Sigmoid colon (tissue), 7 donors: ENCODE measurements at regions of chr6 and their contacts with region 1.

Region 1: DNA sequence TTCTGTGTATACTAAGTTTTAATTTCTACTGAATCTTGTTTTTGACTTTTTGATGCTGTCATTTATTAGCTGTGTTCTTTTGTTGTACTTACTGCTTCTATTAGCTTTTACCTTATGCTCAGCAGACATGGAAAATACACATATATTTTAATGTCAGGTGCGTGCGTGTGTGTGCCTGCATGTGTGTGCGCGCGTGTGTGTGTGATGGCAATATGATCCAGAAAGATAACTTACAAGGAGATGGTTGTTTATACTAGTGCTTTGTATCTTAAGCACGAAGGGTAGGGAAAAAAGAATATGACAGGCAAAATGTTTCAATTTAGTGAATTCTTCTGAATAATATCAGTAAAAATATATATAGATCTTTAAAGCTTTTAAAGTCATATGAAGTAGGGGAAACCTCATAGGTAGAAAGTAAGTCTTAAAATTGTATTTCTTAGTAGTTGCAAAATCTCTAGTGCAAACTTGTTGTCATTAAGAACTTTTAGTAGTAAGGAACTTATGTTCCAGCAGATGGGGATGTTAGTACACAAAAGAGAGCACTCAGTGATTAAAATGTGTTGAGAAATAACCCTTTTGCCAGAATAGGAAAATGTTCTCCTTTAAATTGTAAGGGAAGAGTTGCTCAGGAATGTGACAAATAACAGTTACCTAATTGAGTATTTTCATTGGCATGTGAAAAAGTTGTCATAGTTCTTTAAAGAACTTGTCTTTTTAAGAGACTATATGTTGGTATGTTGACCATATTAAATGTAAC is 13.2 kb downstream of the QKI start:
- DNase-seq: no peak
- H3K4me3 ChIP-seq: no peak overlapping the region
- H3K27ac ChIP-seq: no peak overlapping the region
- H3K4me1 ChIP-seq: peaks cover 0 to 95% (median 69%) of the 10 kb centered on the region in 4 donors
- H3K27me3 ChIP-seq: no peaks in the 10 kb centered on the region
- CTCF ChIP-seq: peak in 3 of 4 experiments; percentile 17 to 26 (median 24)
- EP300 ChIP-seq: no peak
- POLR2A ChIP-seq: no peak

Region 2: DNA sequence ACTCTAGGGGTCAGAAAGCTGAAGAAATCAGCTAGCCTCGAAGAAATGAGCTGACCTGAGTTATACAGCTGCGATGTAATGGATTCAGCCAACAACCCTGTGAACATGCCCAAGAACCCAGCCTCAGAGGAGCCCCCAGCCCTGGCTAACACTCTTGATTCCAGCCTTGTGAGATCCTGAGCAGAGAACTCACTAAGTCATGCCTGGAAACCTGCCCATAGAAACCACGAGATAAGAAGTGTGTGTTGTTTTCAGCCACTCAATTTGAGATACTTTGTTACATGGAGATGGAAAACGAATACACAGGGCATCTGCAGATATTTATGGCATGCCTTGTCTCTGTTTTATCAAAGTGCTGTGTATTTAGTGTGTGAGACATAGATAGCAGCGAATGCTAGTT is 252.1 kb after region 1 on chr6:
- intact Hi-C with region 1: no loop called
- DNase-seq: no peak
- H3K4me3 ChIP-seq: no peak overlapping the region
- H3K27ac ChIP-seq: no peak overlapping the region
- H3K4me1 ChIP-seq: no peaks in the 10 kb centered on the region
- H3K27me3 ChIP-seq: no peaks in the 10 kb centered on the region
- CTCF ChIP-seq: no peak
- EP300 ChIP-seq: no peak
- POLR2A ChIP-seq: no peak

Region 3: GRCh38 chr6:164927288-164928056 is 1499.8 kb after region 1 on chr6:
- intact Hi-C with region 1: loop called (anchors 5 kb)
- DNase-seq: peak; percentile 75
- H3K4me3 ChIP-seq: no peak overlapping the region
- H3K27ac ChIP-seq: no peak overlapping the region
- H3K4me1 ChIP-seq: peaks cover 0 to 8% (median 0%) of the 10 kb centered on the region in 4 donors
- H3K27me3 ChIP-seq: no peaks in the 10 kb centered on the region
- CTCF ChIP-seq: peak; percentile 71 to 99 (median 85)
- EP300 ChIP-seq: no peak
- POLR2A ChIP-seq: no peak